ENCODE measurements at regions of chr22 and their contacts with region 1.

Region 1: GRCh38 chr22:31676700-31677099 is 14.7 kb upstream of the PISD start:
- DNase-seq: peak; percentile 74
- ATAC-seq: peak; percentile 95
- H3K4me3 ChIP-seq: peak overlapping the region; percentile 25
- H3K27ac ChIP-seq: no peak overlapping the region
- H3K4me1 ChIP-seq: peaks cover 9% of the 10 kb centered on the region
- H3K27me3 ChIP-seq: no peaks in the 10 kb centered on the region
- CTCF ChIP-seq: no peak
- POLR2A ChIP-seq: no peak
- RAD21 ChIP-seq: no peak

Region 2: GRCh38 chr22:31567196-31567595 is 109.5 kb before region 1 on chr22:
- CTCF ChIA-PET with region 1: interaction called, 12 read pairs
- POLR2A ChIA-PET with region 1: no interaction called
- dilution Hi-C with region 1: no loop called
- in situ Hi-C with region 1: no loop called
- intact Hi-C with region 1: no loop called
- DNase-seq: no peak
- ATAC-seq: no peak
- H3K4me3 ChIP-seq: no peak overlapping the region
- H3K27ac ChIP-seq: no peak overlapping the region
- H3K4me1 ChIP-seq: peaks cover 3% of the 10 kb centered on the region; the same call in 1 of the 2 replicates
- H3K27me3 ChIP-seq: no peaks in the 10 kb centered on the region
- CTCF ChIP-seq: no peak
- POLR2A ChIP-seq: no peak
- RAD21 ChIP-seq: no peak

Region 3: GRCh38 chr22:31602259-31602952 is 74.3 kb before region 1 on chr22:
- CTCF ChIA-PET with region 1: no interaction called
- POLR2A ChIA-PET with region 1: no interaction called
- dilution Hi-C with region 1: no loop called
- in situ Hi-C with region 1: no loop called
- intact Hi-C with region 1: no loop called
- DNase-seq: peak; percentile 91
- ATAC-seq: peak; percentile 95
- H3K4me3 ChIP-seq: no peak overlapping the region
- H3K27ac ChIP-seq: peak overlapping the region; percentile 82
- H3K4me1 ChIP-seq: peaks cover 8% of the 10 kb centered on the region
- H3K27me3 ChIP-seq: no peaks in the 10 kb centered on the region
- CTCF ChIP-seq: no peak
- POLR2A ChIP-seq: no peak
- RAD21 ChIP-seq: no peak

Region 4: GRCh38 chr22:31723723-31724122 is 47.0 kb after region 1 on chr22:
- CTCF ChIA-PET with region 1: no interaction called
- POLR2A ChIA-PET with region 1: no interaction called
- dilution Hi-C with region 1: no loop called
- in situ Hi-C with region 1: no loop called
- intact Hi-C with region 1: loop called (anchors 5 kb)
- DNase-seq: no peak
- ATAC-seq: no peak
- H3K4me3 ChIP-seq: no peak overlapping the region
- H3K27ac ChIP-seq: no peak overlapping the region
- H3K4me1 ChIP-seq: no peaks in the 10 kb centered on the region
- H3K27me3 ChIP-seq: no peaks in the 10 kb centered on the region
- CTCF ChIP-seq: no peak
- POLR2A ChIP-seq: no peak
- RAD21 ChIP-seq: no peak

Region 5: GRCh38 chr22:31749636-31750364 is 73.1 kb after region 1 on chr22 and contains the start of gene PRR14L:
- CTCF ChIA-PET with region 1: no interaction called
- POLR2A ChIA-PET with region 1: no interaction called
- dilution Hi-C with region 1: no loop called
- in situ Hi-C with region 1: no loop called
- intact Hi-C with region 1: loop called (anchors 5 kb)
- DNase-seq: peak; percentile 90
- ATAC-seq: peak; percentile 86
- H3K4me3 ChIP-seq: peak within 1 kb of the TSS; percentile 73
- H3K27ac ChIP-seq: peak within 1 kb of the TSS; percentile 87
- H3K4me1 ChIP-seq: peaks cover 10% of the 10 kb centered on the region
- H3K27me3 ChIP-seq: no peaks in the 10 kb centered on the region
- CTCF ChIP-seq: peak; percentile 1; the same call in 1 of the 2 replicates
- POLR2A ChIP-seq: peak; percentile 85
- RAD21 ChIP-seq: peak; percentile 15; the same call in 1 of the 2 replicates
- total RNA-seq, gene PRR14L: 19.7 and 20.6 TPM in 2 replicates

Region 6: GRCh38 chr22:31962392-31963125 is 285.9 kb after region 1 on chr22:
- CTCF ChIA-PET with region 1: no interaction called
- POLR2A ChIA-PET with region 1: no interaction called
- dilution Hi-C with region 1: no loop called
- in situ Hi-C with region 1: loop called (anchors 5 kb)
- intact Hi-C with region 1: no loop called
- DNase-seq: no peak
- ATAC-seq: no peak
- H3K4me3 ChIP-seq: no peak overlapping the region
- H3K27ac ChIP-seq: no peak overlapping the region
- H3K4me1 ChIP-seq: no peaks in the 10 kb centered on the region
- H3K27me3 ChIP-seq: no peaks in the 10 kb centered on the region; the same call in 1 of the 2 replicates
- CTCF ChIP-seq: no peak
- POLR2A ChIP-seq: no peak
- RAD21 ChIP-seq: no peak

Region 7: GRCh38 chr22:32080904-32081303 is 404.2 kb after region 1 on chr22:
- CTCF ChIA-PET with region 1: no interaction called
- POLR2A ChIA-PET with region 1: no interaction called
- dilution Hi-C with region 1: no loop called
- in situ Hi-C with region 1: loop called (anchors 25 kb)
- intact Hi-C with region 1: no loop called
- DNase-seq: peak; percentile 47
- ATAC-seq: peak; percentile 79
- H3K4me3 ChIP-seq: no peak overlapping the region
- H3K27ac ChIP-seq: no peak overlapping the region
- H3K4me1 ChIP-seq: no peaks in the 10 kb centered on the region
- H3K27me3 ChIP-seq: peaks cover 17% of the 10 kb centered on the region
- CTCF ChIP-seq: peak; percentile 56
- POLR2A ChIP-seq: no peak
- RAD21 ChIP-seq: peak; percentile 71

Measured in IMR-90 (cell line).